WTC11 (cell line): ENCODE measurements at regions of chr16 and their contacts with region 1.

Region 1: GRCh38 chr16:49639739-49640431 is 216.0 kb downstream of the ZNF423 start:
- DNase-seq: peak; percentile 51
- ATAC-seq: peak; percentile 68
- H3K4me3 Mint-ChIP-seq: peak overlapping the region; percentile 0; the same call in 1 of the 2 replicates
- H3K27ac Mint-ChIP-seq: peak overlapping the region; percentile 92
- H3K4me1 Mint-ChIP-seq: peaks cover 52% of the 10 kb centered on the region
- H3K27me3 Mint-ChIP-seq: no peaks in the 10 kb centered on the region
- CTCF ChIP-seq: no peak

Region 2: DNA sequence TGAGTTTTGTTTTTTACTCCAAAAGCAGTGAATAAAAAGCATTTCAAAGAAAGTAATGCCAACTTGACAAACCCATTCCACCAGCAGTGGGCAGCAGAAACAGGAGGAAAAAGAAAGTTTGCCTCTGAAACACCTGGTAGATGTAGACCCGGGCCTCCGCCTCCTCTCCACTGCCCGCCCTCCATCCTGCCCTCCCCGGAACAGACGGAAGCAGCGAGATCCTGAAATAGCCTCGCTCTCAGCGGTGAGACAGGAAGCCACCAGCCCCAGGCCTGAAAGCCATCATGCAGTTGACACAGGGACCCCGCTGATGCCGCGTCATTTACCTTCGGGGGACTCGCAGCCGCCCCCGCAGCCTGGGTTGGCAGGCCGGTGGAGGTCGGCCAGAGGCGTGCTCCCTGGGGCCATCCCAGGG is 198.5 kb before region 1 on chr16:
- CTCF ChIA-PET with region 1: no interaction called
- POLR2A ChIA-PET with region 1: no interaction called
- DNase-seq: peak; percentile 67
- ATAC-seq: peak; percentile 84
- H3K4me3 Mint-ChIP-seq: no peak overlapping the region
- H3K27ac Mint-ChIP-seq: no peak overlapping the region
- H3K4me1 Mint-ChIP-seq: peaks cover 51% of the 10 kb centered on the region
- H3K27me3 Mint-ChIP-seq: no peaks in the 10 kb centered on the region
- CTCF ChIP-seq: no peak

Region 3: GRCh38 chr16:49664221-49665215 is 24.6 kb after region 1 on chr16:
- CTCF ChIA-PET with region 1: interaction called, 10 read pairs
- POLR2A ChIA-PET with region 1: no interaction called
- DNase-seq: no peak
- ATAC-seq: no peak
- H3K4me3 Mint-ChIP-seq: no peak overlapping the region
- H3K27ac Mint-ChIP-seq: no peak overlapping the region
- H3K4me1 Mint-ChIP-seq: peaks cover 34% of the 10 kb centered on the region
- H3K27me3 Mint-ChIP-seq: no peaks in the 10 kb centered on the region
- CTCF ChIP-seq: no peak

Region 4: GRCh38 chr16:49739381-49739780 is 99.5 kb after region 1 on chr16:
- CTCF ChIA-PET with region 1: interaction called, 11 read pairs
- POLR2A ChIA-PET with region 1: no interaction called
- DNase-seq: peak; percentile 69
- ATAC-seq: peak; percentile 88
- H3K4me3 Mint-ChIP-seq: no peak overlapping the region
- H3K27ac Mint-ChIP-seq: no peak overlapping the region
- H3K4me1 Mint-ChIP-seq: peaks cover 29% of the 10 kb centered on the region
- H3K27me3 Mint-ChIP-seq: no peaks in the 10 kb centered on the region
- CTCF ChIP-seq: no peak

Region 5: DNA sequence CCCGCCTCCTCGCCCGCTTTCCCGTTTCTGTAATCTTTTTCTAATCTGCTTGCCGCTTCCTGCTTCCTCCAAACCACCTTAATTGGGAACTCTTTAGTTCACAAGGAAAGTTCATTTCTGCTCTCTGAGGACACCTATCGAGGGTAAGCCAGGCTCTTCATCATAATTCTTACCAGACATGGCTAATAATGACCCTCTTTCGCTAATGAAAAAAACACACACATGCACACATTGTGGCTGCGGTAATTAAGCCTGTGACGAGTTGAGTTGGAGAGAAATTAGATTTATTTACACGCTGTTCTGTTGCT is 115.4 kb after region 1 on chr16:
- CTCF ChIA-PET with region 1: interaction called, 10 read pairs
- POLR2A ChIA-PET with region 1: no interaction called
- DNase-seq: no peak
- ATAC-seq: peak; percentile 18
- H3K4me3 Mint-ChIP-seq: peak overlapping the region; percentile 64
- H3K27ac Mint-ChIP-seq: peak overlapping the region; percentile 86
- H3K4me1 Mint-ChIP-seq: peaks cover 78% of the 10 kb centered on the region
- H3K27me3 Mint-ChIP-seq: no peaks in the 10 kb centered on the region
- CTCF ChIP-seq: no peak